Aorta (tissue), 5 donors: ENCODE measurements at regions of chr15 and their contacts with region 1.

Region 1: GRCh38 chr15:34587717-34588674 is 4.5 kb upstream of the GOLGA8B start:
- DNase-seq: peak in 1 of 2 donors; percentile 66
- ATAC-seq: peak; percentile 90
- H3K4me3 ChIP-seq: no peak overlapping the region
- H3K27ac ChIP-seq: no peak overlapping the region
- H3K4me1 ChIP-seq: no peaks in the 10 kb centered on the region
- H3K27me3 ChIP-seq: no peaks in the 10 kb centered on the region

Region 2: GRCh38 chr15:33194704-33195670 is 1393.0 kb before region 1 on chr15 and contains the start of gene FMN1:
- intact Hi-C with region 1: loop called in 1 of 2 experiments (anchors 10 kb)
- DNase-seq: peak; percentile 97 to 98
- ATAC-seq: peak; percentile 99
- H3K4me3 ChIP-seq: peak within 1 kb of the TSS; percentile 34 to 70
- H3K27ac ChIP-seq: peak within 1 kb of the TSS in 1 of 2 donors; percentile 29
- H3K4me1 ChIP-seq: no peaks in the 10 kb centered on the region
- H3K27me3 ChIP-seq: no peaks in the 10 kb centered on the region
- total RNA-seq, gene FMN1: 18.4 to 23.4 TPM

Region 3: GRCh38 chr15:34223904-34224596 is 363.9 kb before region 1 on chr15:
- intact Hi-C with region 1: loop called in 1 of 2 experiments (anchors 10 kb)
- DNase-seq: no peak
- ATAC-seq: no peak
- H3K4me3 ChIP-seq: peak overlapping the region; percentile 43 to 51
- H3K27ac ChIP-seq: peak overlapping the region in 1 of 2 donors; percentile 87
- H3K4me1 ChIP-seq: peaks cover 0 to 2% of the 10 kb centered on the region in 2 donors
- H3K27me3 ChIP-seq: no peaks in the 10 kb centered on the region

Region 4: GRCh38 chr15:34456658-34457057 is 131.3 kb before region 1 on chr15:
- intact Hi-C with region 1: no loop called
- DNase-seq: no peak
- ATAC-seq: no peak
- H3K4me3 ChIP-seq: no peak overlapping the region
- H3K27ac ChIP-seq: no peak overlapping the region
- H3K4me1 ChIP-seq: no peaks in the 10 kb centered on the region
- H3K27me3 ChIP-seq: no peaks in the 10 kb centered on the region

Region 5: DNA sequence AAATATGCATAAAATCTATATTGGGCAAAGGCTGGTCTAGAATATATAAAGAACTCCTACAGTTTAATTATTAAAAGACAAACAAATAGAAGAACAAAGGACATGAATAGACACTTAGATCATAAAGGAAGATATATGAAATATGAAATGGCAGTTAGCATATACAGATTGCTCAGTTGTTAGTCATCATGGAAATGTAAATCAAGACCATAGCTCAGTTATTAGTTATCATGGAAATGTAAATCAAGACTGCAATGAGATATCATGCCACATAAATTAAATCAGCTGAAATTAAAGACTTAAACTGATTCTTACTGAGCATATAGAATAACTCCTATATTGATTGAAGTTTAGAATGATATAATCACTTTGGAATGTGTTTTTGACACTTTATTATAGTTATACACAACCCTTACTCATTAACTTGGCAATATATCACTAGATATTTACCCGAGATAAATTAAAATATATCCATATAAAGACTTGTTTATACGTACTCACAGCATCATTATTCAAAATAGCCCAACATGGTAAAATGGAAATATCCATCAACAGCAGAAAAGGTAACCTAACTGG is 40.7 kb after region 1 on chr15:
- intact Hi-C with region 1: no loop called
- DNase-seq: no peak
- ATAC-seq: no peak
- H3K4me3 ChIP-seq: no peak overlapping the region
- H3K27ac ChIP-seq: no peak overlapping the region
- H3K4me1 ChIP-seq: no peaks in the 10 kb centered on the region
- H3K27me3 ChIP-seq: no peaks in the 10 kb centered on the region